Activated naive CD4-positive, alpha-beta T cell treated with anti-CD3 and anti-CD28 coated beads, Interleukin-2, amount 10 ng/mL, durations not matched to agents 7 days and 5 days (primary cell): ENCODE measurements at regions of chr19 and their contacts with region 1.

Region 1: GRCh38 chr19:40662921-40663694 is 27.3 kb downstream of the NUMBL start:
- DNase-seq: peak; percentile 93
- H3K4me3 Mint-ChIP-seq: peak overlapping the region; percentile 79
- H3K27ac Mint-ChIP-seq: peak overlapping the region; percentile 85
- H3K4me1 Mint-ChIP-seq: peaks cover 20% of the 10 kb centered on the region
- H3K27me3 Mint-ChIP-seq: peaks cover 25% of the 10 kb centered on the region

Region 2: DNA sequence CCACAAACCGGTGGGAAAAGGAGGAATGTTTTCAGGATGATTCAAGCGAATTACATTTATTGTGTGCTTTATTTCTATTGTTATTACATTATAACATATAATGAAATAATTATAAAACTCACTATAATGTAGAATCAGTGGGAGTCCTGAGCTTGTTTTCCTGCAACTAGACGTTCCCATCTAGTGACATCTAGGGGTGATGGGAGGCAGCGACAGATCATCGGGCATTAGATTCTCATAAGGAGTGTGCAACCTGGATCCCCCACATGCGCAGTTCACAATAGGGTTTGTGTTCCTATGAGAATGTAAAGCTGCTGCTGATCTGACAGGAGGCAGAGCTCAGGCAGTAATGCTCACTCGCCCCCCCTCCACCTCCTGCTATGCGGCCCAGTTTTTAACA is 141.8 kb before region 1 on chr19:
- CTCF ChIA-PET with region 1: no interaction called
- DNase-seq: peak; percentile 34
- H3K4me3 Mint-ChIP-seq: no peak overlapping the region
- H3K27ac Mint-ChIP-seq: no peak overlapping the region
- H3K4me1 Mint-ChIP-seq: peaks cover 3% of the 10 kb centered on the region
- H3K27me3 Mint-ChIP-seq: peaks cover 67% of the 10 kb centered on the region

Region 3: GRCh38 chr19:40806488-40807468 is 143.7 kb after region 1 on chr19:
- CTCF ChIA-PET with region 1: interaction called, 23 read pairs
- DNase-seq: peak; percentile 86
- H3K4me3 Mint-ChIP-seq: peak overlapping the region; percentile 81
- H3K27ac Mint-ChIP-seq: peak overlapping the region; percentile 96
- H3K4me1 Mint-ChIP-seq: peaks cover 95% of the 10 kb centered on the region
- H3K27me3 Mint-ChIP-seq: peaks cover 14% of the 10 kb centered on the region

Region 4: DNA sequence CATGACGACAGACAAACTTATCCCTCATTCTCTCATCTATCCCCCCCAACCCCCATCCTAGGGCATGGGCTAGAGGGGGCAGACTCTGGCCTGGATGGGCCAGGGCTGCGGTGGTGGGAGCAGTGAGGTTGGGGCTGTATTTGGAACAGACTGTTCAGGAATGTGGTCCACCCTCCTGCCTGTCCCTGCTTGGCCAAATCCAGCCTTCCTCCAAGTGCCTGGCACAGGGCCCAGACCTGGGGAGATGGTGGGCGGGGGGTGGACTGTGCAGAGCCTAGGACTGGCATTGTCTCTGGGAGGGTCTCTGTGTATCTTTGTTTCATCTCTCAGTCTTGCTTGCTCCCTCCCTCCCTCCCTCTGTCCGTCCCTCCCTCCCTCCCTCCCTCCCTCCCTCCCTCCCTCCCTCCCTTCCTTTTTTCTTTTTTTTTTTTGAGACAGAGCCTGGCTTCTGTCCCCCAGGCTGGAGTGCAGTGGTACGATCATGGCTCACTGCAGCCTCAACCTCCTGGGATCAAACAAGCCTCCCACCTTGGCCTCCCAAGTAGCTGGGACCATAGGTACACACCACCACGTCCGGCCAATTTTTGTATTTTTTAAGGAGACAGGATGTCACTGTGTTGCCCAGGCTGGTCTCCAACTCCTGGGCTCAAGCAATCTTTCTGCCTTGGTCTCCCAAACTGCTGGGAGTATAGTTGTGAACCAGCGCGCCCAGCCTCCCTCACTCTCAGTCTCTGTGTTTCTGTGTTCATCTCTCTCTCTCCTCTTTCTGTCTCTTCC is 150.3 kb after region 1 on chr19:
- CTCF ChIA-PET with region 1: interaction called, 32 read pairs
- DNase-seq: no peak
- H3K4me3 Mint-ChIP-seq: no peak overlapping the region
- H3K27ac Mint-ChIP-seq: no peak overlapping the region
- H3K4me1 Mint-ChIP-seq: peaks cover 52% of the 10 kb centered on the region
- H3K27me3 Mint-ChIP-seq: peaks cover 72% of the 10 kb centered on the region